Activated CD4-positive, alpha-beta T cell treated with anti-CD3 and anti-CD28 coated beads, Interleukin-2, amount 10 ng/mL, durations not matched to agents 7 days and 5 days (primary cell): ENCODE measurements at regions of chr1 and their contacts with region 1.

Region 1: GRCh38 chr1:45656573-45657226 is 29.6 kb downstream of the GPBP1L1 start:
- DNase-seq: no peak
- H3K4me3 Mint-ChIP-seq: no peak overlapping the region
- H3K27ac Mint-ChIP-seq: peak overlapping the region; percentile 25
- H3K4me1 Mint-ChIP-seq: peaks cover 5% of the 10 kb centered on the region
- H3K27me3 Mint-ChIP-seq: no peaks in the 10 kb centered on the region

Region 2: GRCh38 chr1:45550401-45551351 is 106.0 kb before region 1 on chr1 and contains the start of gene AKR1A1:
- CTCF ChIA-PET with region 1: no interaction called
- POLR2A ChIA-PET with region 1: interaction called, 12 read pairs
- DNase-seq: peak; percentile 89
- H3K4me3 Mint-ChIP-seq: peak within 1 kb of the TSS; percentile 92
- H3K27ac Mint-ChIP-seq: peak within 1 kb of the TSS; percentile 92
- H3K4me1 Mint-ChIP-seq: peaks cover 25% of the 10 kb centered on the region
- H3K27me3 Mint-ChIP-seq: no peaks in the 10 kb centered on the region
- total RNA-seq, gene AKR1A1: 134 to 135 TPM